HCT116 (cell line): ENCODE measurements at regions of chr18 and their contacts with region 1.

Region 1: DNA sequence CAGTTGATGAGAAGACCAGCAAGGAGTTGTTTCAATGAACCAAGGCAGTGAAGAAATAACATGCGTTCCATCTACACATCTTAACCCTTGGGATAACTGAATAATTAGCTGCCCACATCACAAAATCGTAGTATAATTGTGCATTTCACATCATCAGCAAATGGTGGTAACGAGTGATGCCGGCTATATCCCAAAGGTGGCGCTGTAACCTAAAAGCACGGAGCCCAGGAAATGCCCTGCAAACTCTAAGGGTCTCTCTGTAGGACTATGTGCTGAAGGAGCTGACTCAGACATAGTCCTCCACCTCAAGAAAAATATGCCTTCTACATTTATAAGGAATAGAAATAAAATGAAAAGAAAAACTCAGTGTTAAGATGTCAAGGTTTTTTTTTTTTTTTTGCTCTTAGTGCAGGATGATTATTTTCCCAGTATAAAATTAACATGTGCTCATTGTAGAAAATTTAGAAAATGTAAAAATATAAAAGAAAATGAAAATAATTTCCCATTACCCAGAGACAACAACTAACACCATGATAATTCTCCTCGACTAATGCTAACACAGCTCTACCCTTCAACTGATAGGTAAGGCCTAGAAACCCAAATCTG is 23.1 kb upstream of the DSG3 start:
- DNase-seq: peak; percentile 64
- ATAC-seq: peak; percentile 83
- H3K4me3 ChIP-seq: no peak overlapping the region
- H3K27ac ChIP-seq: no peak overlapping the region
- H3K4me1 ChIP-seq: peaks cover 0 to 26% of the 10 kb centered on the region in 2 experiments; a peak in 3 of 4 replicates
- H3K27me3 ChIP-seq: no peaks in the 10 kb centered on the region
- CTCF ChIP-seq: peak; percentile 79 to 96 (median 93)
- POLR2A ChIP-seq: no peak
- RAD21 ChIP-seq: peak; percentile 94

Region 2: GRCh38 chr18:31267823-31268481 is 156.5 kb before region 1 on chr18:
- CTCF ChIA-PET with region 1: interaction called, 3 read pairs
- POLR2A ChIA-PET with region 1: no interaction called
- RAD21 ChIA-PET with region 1: no interaction called
- intact Hi-C with region 1: loop called (anchors 5 kb)
- DNase-seq: no peak
- ATAC-seq: no peak
- H3K4me3 ChIP-seq: no peak overlapping the region
- H3K27ac ChIP-seq: no peak overlapping the region
- H3K4me1 ChIP-seq: peaks cover 0 to 9% of the 10 kb centered on the region in 2 experiments; a peak in 3 of 4 replicates
- H3K27me3 ChIP-seq: no peaks in the 10 kb centered on the region
- CTCF ChIP-seq: no peak
- POLR2A ChIP-seq: no peak
- RAD21 ChIP-seq: no peak

Region 3: GRCh38 chr18:31512203-31512764 is 87.8 kb after region 1 on chr18:
- CTCF ChIA-PET with region 1: interaction called, 3 read pairs
- POLR2A ChIA-PET with region 1: no interaction called
- RAD21 ChIA-PET with region 1: no interaction called
- intact Hi-C with region 1: loop called (anchors 2 kb)
- DNase-seq: no peak
- ATAC-seq: peak; percentile 89
- H3K4me3 ChIP-seq: peak overlapping the region in 1 of 2 experiments; percentile 39; a peak in 1 of 4 replicates
- H3K27ac ChIP-seq: peak overlapping the region; percentile 36
- H3K4me1 ChIP-seq: peaks cover 57 to 59% of the 10 kb centered on the region in 2 experiments
- H3K27me3 ChIP-seq: no peaks in the 10 kb centered on the region
- CTCF ChIP-seq: no peak
- POLR2A ChIP-seq: no peak
- RAD21 ChIP-seq: no peak

Region 4: GRCh38 chr18:31563778-31564177 is 139.3 kb after region 1 on chr18:
- CTCF ChIA-PET with region 1: interaction called, 17 read pairs
- POLR2A ChIA-PET with region 1: no interaction called
- RAD21 ChIA-PET with region 1: interaction called in 1 of 2 experiments, 8 read pairs
- intact Hi-C with region 1: no loop called
- DNase-seq: no peak
- ATAC-seq: no peak; the same call in 1 of the 2 replicates
- H3K4me3 ChIP-seq: no peak overlapping the region
- H3K27ac ChIP-seq: no peak overlapping the region
- H3K4me1 ChIP-seq: no peaks in the 10 kb centered on the region
- H3K27me3 ChIP-seq: no peaks in the 10 kb centered on the region
- CTCF ChIP-seq: peak in 2 of 3 experiments; percentile 22 to 30; a peak in 2 of 6 replicates
- POLR2A ChIP-seq: no peak
- RAD21 ChIP-seq: peak; percentile 43

Region 5: DNA sequence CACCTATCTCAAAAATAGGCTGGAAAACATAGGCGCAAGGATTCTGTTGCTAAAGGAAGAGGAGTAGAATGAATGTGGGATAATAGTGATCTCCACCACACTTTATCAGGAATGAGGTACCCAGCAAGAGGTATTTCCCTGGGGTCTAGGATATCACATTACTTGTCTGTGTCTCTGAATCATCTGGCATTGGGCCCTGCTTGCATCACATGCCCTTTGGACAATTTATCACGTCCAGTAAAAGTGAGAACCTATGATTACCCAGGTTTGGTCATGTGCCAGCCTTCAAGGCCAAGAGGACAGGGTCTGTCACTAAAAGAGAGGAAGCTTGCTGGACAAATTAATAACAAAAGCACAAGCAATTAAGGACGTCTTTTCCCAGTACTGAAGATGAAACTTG is 529.9 kb after region 1 on chr18:
- CTCF ChIA-PET with region 1: no interaction called
- POLR2A ChIA-PET with region 1: no interaction called
- RAD21 ChIA-PET with region 1: no interaction called
- intact Hi-C with region 1: loop called (anchors 10 kb)
- DNase-seq: no peak
- ATAC-seq: no peak
- H3K4me3 ChIP-seq: no peak overlapping the region
- H3K27ac ChIP-seq: no peak overlapping the region
- H3K4me1 ChIP-seq: peaks cover 5 to 10% of the 10 kb centered on the region in 2 experiments; a peak in 3 of 4 replicates
- H3K27me3 ChIP-seq: no peaks in the 10 kb centered on the region
- CTCF ChIP-seq: no peak
- POLR2A ChIP-seq: no peak
- RAD21 ChIP-seq: no peak